KBM-7 (cell line): ENCODE measurements at regions of chr15 and their contacts with region 1.

Region 1: DNA sequence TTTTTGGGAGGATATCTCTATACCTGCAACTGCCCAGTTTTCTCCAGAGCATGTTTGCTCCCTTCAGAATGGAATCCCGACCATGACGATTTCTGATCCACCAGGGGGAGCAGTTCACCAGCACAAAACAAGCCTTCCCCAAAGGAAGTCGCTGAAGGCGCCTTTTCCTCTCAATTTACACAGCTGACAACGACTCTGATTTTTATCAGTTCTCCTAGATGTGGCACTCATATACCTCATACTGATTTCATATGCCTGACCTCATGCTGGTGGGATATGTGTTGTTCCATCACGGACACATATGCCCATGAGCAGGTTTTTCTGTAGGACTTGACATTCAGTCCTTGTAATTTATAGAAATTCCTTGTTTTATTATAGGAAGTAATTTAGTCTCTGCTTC is 1028.2 kb downstream of the MCTP2 start:
- DNase-seq: peak; percentile 73

Region 2: DNA sequence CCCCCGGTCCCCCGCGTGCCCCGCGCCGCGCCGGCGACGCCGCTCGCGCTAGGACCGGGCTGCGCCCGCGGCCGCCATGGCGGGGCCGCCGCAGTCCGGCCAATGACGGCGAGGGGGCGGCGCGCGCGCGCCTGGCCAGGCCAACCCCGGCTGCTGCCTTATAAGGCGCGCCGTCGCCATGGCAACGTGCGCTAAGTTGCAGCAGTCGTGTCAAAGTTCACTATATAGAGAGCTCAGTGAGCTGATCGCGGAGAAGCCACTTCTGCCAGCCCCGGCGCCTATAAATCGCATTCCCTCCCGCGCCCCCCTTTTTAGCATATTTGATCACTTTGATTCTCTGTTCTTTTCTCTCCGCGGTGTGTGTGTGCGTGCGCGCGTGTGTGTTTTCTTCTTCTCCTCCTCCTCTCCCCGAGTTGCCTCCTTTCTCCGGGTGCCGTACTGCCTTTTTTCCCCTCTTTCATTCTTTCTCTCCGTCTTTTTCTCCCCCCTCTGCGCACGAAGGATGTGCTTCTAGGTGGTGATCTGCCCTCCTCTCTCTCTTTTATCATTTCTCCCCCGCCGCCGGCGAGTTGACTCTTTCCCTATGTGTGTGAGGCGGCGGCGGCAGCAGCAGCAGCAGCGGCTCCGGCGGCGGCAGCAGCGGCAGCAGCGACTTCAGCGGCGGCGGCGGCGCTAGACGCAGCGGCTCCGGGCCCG is 1071.1 kb after region 1 on chr15 and contains the start of gene NR2F2:
- in situ Hi-C with region 1: loop called (anchors 25 kb)
- DNase-seq: peak; percentile 83